AG04450 (cell line): ENCODE measurements at regions of chrX and their contacts with region 1.

Region 1: DNA sequence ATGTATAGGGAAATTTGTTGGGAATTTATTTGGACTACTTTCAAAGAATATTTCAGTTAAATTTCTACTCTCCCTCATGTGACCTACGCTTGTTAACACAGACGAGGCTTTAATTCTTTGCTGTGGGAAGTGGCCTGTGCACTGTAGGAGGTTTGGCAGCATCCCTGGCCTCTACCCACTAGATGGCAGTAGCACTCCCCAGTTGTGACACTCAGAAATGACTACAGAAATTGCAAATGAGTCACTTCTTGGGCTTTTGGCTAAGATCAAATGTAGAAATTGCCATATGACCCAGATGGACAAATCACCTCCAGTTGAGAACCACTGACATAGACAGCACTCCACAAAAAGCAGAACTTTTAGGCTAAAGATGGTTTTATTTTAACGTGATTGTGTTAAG is 22.1 kb downstream of the PIR start:
- DNase-seq: no peak
- H3K4me3 ChIP-seq: no peak overlapping the region
- H3K27ac ChIP-seq: no peak overlapping the region
- H3K27me3 ChIP-seq: no peaks in the 10 kb centered on the region
- CTCF ChIP-seq: peak; percentile 81

Region 2: DNA sequence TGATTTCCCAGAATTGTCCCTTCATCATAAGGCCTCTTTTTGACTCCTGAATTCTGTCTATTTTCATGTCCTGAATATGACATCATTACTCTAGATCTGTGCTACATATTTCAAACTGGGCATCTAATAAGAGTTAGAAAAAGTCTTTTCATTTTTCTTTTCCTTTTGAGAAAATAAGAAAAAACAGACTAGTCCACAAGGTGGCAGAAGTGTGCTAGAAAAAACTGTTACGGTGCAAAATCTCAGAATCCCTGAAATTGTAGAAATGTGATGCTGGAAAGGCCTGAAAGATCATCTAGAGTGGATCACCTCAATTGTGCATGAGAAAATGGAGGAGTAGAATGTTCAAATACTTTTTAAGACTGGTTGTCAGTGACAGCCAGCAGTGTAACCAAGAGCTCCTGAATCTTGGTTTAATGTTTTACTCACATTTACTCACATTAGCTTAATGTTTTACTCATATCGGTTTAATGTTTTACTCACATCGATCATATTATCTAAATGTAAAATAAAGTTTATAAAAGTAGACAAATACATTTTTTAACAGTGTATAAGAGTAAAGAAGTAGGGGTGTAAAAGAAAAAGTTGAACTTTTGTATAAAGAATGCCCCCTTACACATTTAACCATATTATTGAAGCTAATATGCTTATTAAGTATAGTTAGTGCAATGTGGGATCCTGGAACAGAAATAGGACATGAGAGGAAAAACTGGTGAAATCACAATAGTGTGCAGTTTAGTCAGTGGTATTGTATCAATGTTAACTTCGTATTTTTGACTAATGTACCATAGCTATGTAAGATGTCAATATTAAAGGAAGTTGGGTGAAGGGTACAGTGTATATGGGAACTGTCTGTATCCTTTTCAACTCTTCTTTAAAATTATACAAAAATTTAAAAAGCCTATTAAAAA is 170.8 kb before region 1 on chrX:
- CTCF ChIA-PET with region 1: interaction called, 10 read pairs
- POLR2A ChIA-PET with region 1: no interaction called
- DNase-seq: no peak
- H3K4me3 ChIP-seq: no peak overlapping the region
- H3K27ac ChIP-seq: no peak overlapping the region
- H3K27me3 ChIP-seq: no peaks in the 10 kb centered on the region
- CTCF ChIP-seq: peak; percentile 49

Region 3: DNA sequence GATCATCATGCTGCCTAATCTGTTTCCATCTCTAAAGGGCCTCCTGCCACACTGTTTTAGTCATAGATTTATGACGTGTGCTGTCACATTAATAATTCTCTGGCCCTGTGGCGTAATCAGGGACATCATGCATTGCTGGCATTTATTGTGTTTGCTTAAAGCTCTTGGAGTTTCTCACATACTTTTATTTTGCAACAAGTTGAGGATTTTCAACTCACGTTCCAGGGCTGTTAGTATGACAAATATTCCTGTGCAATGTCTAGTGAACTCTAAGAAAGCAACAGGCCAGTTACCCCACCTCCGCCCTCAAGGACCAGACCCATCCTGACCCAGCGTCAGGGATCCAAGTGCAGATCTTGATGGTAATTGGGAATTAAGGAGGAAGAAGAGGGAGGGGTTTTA is 127.9 kb before region 1 on chrX:
- CTCF ChIA-PET with region 1: interaction called, 206 read pairs
- POLR2A ChIA-PET with region 1: no interaction called
- DNase-seq: no peak
- H3K4me3 ChIP-seq: no peak overlapping the region
- H3K27ac ChIP-seq: no peak overlapping the region
- H3K27me3 ChIP-seq: peaks cover 3% of the 10 kb centered on the region
- CTCF ChIP-seq: no peak

Region 4: GRCh38 chrX:15349046-15349445 is 122.0 kb before region 1 on chrX:
- CTCF ChIA-PET with region 1: interaction called, 206 read pairs
- POLR2A ChIA-PET with region 1: no interaction called
- DNase-seq: peak; percentile 53
- H3K4me3 ChIP-seq: no peak overlapping the region
- H3K27ac ChIP-seq: no peak overlapping the region
- H3K27me3 ChIP-seq: no peaks in the 10 kb centered on the region
- CTCF ChIP-seq: peak; percentile 52

Region 5: DNA sequence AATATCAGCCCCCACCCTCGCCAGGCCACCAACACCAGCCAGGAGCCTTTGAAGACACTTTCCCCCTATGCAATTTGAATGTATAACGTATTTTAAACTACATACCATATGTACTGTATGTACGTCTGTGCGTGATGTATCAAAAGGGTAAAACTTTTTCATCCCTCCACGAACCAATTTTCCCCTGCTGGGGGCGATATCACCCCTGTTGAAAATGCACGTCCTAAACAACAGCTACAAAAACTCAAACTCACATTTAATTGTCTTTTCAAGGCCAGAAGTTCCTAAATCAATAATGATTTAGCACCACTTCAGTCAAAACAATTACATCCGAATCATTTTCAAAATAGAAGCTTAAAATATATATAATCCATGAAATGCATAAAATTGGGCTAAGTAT is 88.2 kb before region 1 on chrX:
- CTCF ChIA-PET with region 1: interaction called, 12 read pairs
- POLR2A ChIA-PET with region 1: no interaction called
- DNase-seq: no peak
- H3K4me3 ChIP-seq: no peak overlapping the region
- H3K27ac ChIP-seq: no peak overlapping the region
- H3K27me3 ChIP-seq: no peaks in the 10 kb centered on the region
- CTCF ChIP-seq: 0 out of 2 replicates have a peak, but pooled peaks have one; percentile 9

Region 6: GRCh38 chrX:15524417-15524816 is 53.4 kb after region 1 on chrX:
- CTCF ChIA-PET with region 1: no interaction called
- POLR2A ChIA-PET with region 1: no interaction called
- DNase-seq: no peak
- H3K4me3 ChIP-seq: no peak overlapping the region
- H3K27ac ChIP-seq: no peak overlapping the region
- H3K27me3 ChIP-seq: no peaks in the 10 kb centered on the region
- CTCF ChIP-seq: no peak